OCI-LY7 (cell line): ENCODE measurements at regions of chr10 and their contacts with region 1.

Region 1: DNA sequence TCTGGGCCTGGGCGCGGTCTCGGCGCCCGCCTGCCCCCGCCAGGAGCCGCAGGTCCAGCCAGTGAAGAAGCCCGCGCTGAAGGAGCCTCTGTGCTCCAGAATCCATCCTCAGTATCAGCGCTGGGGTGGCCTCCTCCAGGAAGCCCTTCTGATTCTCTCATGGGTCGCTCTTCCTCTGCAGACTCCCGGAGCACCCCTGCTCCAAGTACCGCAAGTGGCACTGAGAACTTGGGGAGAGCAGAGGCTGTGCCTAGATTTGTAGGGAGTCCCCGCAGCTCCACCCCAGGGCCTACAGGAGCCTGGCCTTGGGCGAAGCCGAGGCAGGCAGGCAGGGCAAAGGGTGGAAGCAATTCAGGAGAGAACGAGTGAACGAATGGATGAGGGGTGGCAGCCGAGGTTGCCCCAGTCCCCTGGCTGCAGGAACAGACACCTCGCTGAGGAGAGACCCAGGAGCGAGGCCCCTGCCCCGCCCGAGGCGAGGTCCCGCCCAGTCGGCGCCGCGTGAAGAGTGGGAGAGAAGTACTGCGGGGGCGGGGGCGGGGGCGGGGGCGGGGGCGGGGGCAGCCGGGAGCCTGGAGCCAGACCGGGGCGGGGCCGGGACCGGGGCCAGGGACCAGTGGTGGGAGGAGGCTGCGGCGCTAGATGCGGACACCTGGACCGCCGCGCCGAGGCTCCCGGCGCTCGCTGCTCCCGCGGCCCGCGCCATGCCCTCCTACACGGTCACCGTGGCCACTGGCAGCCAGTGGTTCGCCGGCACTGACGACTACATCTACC is at the start of gene ALOX5:
- DNase-seq: peak; percentile 88
- H3K4me3 ChIP-seq: peak within 1 kb of the TSS; percentile 89
- H3K27ac ChIP-seq: peak within 1 kb of the TSS; percentile 98
- H3K4me1 ChIP-seq: peaks cover 63% of the 10 kb centered on the region
- CTCF ChIP-seq: no peak
- total RNA-seq, gene ALOX5: 146 and 164 TPM in 2 replicates

Region 2: DNA sequence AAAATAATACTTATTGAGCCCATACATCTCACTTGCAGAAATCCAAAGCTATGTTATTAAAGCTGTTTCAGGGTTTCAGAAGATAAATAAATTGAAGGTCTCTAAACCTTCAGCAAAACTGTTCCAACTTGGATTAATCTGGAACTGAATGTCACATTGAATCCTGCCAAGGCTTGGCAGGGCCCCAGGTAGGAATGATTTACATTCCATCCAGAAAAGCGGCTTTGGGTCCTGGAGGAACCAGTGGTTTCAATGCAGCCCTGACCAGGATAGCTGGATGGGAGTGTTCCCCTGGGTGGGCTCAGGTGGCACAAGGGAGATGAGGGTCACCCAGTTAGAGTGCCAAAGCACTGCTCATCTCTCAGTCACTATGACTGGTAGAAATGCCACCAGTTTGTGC is 499.6 kb before region 1 on chr10:
- CTCF ChIA-PET with region 1: no interaction called
- POLR2A ChIA-PET with region 1: no interaction called
- intact Hi-C with region 1: no loop called
- DNase-seq: no peak
- H3K4me3 ChIP-seq: no peak overlapping the region
- H3K27ac ChIP-seq: no peak overlapping the region
- H3K4me1 ChIP-seq: no peaks in the 10 kb centered on the region
- CTCF ChIP-seq: no peak

Region 3: GRCh38 chr10:45249978-45250693 is 123.6 kb before region 1 on chr10:
- CTCF ChIA-PET with region 1: no interaction called
- POLR2A ChIA-PET with region 1: interaction called, 5 read pairs
- intact Hi-C with region 1: loop called (anchors 1 kb)
- DNase-seq: peak; percentile 91
- H3K4me3 ChIP-seq: peak overlapping the region; percentile 54
- H3K27ac ChIP-seq: peak overlapping the region; percentile 72
- H3K4me1 ChIP-seq: peaks cover 10% of the 10 kb centered on the region
- CTCF ChIP-seq: peak; percentile 84

Region 4: DNA sequence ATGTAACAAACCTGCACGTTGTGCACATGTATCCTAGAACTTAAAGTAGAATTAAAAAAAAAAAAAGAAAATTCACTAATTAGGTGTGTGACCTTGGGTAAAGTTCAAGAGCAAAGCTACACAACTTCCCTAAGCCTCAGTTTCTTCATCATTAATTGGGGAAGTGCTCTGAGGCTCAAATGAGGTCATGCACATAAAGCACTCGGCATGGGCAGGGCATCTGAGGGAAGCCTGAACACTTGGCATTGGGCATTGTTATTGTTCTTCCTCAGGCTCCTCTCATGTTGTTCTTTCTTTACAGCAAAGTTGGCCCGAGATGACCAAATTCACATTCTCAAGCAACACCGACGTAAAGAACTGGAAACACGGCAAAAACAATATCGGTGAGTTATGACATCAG is 21.8 kb after region 1 on chr10:
- CTCF ChIA-PET with region 1: no interaction called
- POLR2A ChIA-PET with region 1: no interaction called
- intact Hi-C with region 1: loop called (anchors 2 kb)
- DNase-seq: no peak
- H3K4me3 ChIP-seq: no peak overlapping the region
- H3K27ac ChIP-seq: no peak overlapping the region
- H3K4me1 ChIP-seq: no peaks in the 10 kb centered on the region
- CTCF ChIP-seq: no peak

Region 5: GRCh38 chr10:45653454-45653853 is 279.7 kb after region 1 on chr10:
- CTCF ChIA-PET with region 1: no interaction called
- POLR2A ChIA-PET with region 1: interaction called, 5 read pairs
- intact Hi-C with region 1: loop called (anchors 5 kb)
- DNase-seq: peak; percentile 53
- H3K4me3 ChIP-seq: peak overlapping the region; percentile 51
- H3K27ac ChIP-seq: peak overlapping the region; percentile 83
- H3K4me1 ChIP-seq: peaks cover 68% of the 10 kb centered on the region
- CTCF ChIP-seq: no peak